ENCODE measurements at regions of chr20 and their contacts with region 1.

Region 1: DNA sequence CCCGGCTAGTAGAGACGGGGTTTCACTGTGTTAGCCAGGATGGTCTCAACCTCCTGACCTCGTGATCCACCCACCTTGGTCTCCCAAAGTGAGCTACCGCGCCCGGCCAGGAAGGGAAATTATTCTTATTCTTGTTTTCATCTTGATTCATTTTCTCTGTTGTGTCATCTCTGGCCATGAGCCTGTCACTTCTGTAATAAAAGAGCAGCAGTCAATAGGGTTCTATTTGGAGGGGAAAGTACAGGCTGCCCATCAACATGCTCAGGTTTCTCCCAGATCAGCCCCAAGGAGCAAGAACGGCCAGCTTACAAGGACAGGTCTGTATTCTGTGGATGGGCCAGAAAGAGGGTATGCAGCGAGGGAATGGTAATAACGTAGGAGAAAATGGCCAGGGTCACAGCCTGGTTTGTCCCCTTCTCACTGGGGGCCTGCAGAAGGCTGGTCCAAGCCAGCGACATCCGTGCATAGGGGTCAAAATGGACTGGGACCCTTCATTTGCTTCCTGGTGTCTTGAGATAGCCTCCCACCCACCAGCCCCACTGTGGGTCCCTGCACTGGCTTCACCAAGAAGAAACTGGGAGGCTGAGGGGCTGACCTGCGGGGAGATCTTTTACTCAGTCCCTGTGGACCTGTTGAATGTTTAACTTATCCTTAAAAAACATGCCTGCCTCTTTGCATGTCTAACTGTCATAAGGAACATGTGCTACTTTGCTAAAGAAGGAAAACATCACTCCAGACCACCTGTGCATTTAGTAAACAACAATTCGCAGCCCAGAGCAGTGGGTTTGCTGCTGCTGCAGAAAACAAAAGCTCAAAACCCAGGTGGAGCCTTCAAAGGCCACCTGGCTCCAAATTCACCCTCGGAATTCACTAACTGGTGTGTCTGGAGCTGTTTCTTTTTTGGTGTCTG is 344.8 kb downstream of the PREX1 start:
- DNase-seq: peak; percentile 45
- CTCF ChIP-seq: no peak

Region 2: DNA sequence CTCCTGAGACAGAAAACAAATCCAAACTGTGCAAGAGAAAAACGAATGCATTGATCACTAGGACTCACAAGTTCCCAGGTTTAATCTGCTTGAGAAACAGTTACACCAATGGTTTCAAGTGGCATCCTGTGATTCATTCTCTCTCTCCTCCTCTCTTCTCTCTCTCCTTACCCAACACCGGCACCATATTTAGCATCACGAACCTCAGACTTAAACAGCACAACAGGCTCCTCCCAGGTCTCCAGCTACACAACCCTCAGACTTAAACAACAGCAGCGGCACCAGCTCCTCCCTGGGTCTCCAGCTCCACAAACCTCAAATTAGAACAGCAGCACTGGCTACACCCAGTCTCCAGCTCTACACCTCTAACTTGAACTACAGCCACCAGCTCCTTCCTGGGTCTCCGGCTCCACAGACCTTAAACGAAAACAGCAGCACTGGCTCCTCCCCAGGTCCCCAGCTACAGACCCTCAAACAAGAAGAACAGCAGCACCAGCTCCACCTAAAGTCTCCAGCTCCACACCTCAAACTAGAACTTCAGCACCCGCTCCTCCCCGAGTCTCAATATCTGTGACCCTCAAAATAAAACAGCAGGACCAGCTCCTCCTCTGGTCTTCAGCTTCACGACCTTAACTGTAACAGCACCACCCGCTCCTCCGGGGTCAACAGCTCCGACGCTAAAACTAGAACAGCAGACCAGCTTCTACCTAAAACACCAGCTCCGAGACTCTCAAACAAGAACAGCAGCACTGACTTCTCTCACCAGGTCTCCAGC is 11.1 kb before region 1 on chr20:
- CTCF ChIA-PET with region 1: interaction called, 17 read pairs
- POLR2A ChIA-PET with region 1: no interaction called
- DNase-seq: no peak
- CTCF ChIP-seq: no peak

Measured in GM10248 (cell line).